ENCODE measurements at regions of chr11 and their contacts with region 1.

Region 1: GRCh38 chr11:73393479-73394380 is 17.5 kb downstream of the RELT start:
- DNase-seq: peak; percentile 82
- CTCF ChIP-seq: peak; percentile 76

Region 2: GRCh38 chr11:73307323-73308002 is 86.3 kb before region 1 on chr11:
- CTCF ChIA-PET with region 1: interaction called, 15 read pairs
- POLR2A ChIA-PET with region 1: no interaction called
- DNase-seq: peak; percentile 95
- CTCF ChIP-seq: peak; percentile 89

Region 3: DNA sequence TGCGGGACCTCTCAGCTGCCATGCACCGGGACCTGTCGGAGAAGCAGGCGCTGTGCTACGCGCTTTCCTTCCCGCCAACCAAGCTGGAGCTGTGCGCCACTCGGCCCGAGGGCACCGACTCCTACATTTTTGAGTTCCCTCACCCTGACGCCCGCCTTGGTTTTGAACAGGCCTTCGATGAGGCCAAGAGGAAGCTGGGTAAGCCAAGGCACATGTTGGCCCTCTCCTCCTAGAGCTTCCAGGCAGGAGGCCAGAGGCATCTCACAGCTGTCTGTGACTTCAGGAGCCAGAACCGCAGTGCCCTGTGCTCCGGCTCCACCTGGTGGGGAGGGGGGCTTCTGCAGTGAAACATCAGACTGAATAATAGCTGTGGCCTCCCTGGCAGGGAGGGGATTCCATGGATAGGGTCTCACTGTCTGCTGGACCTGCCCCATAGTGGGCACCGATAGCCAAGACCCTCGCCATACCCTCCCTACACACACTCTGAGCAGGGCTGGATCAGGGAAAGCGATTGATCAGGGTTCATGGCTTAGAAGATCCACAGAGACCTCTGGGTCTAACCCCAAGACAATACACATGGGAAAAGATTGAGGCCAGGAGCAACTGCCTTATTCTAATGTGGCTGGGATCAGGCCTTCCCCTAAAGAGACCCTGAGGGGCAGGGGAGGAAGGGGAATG is 33.3 kb before region 1 on chr11:
- CTCF ChIA-PET with region 1: interaction called, 24 read pairs
- POLR2A ChIA-PET with region 1: no interaction called
- DNase-seq: no peak
- CTCF ChIP-seq: peak; percentile 32

Region 4: GRCh38 chr11:73404048-73404447 is 10.3 kb after region 1 on chr11:
- CTCF ChIA-PET with region 1: interaction called, 12 read pairs
- POLR2A ChIA-PET with region 1: no interaction called
- DNase-seq: peak; percentile 18
- CTCF ChIP-seq: peak; percentile 21

Region 5: GRCh38 chr11:73507086-73507485 is 113.4 kb after region 1 on chr11:
- CTCF ChIA-PET with region 1: no interaction called
- POLR2A ChIA-PET with region 1: no interaction called
- DNase-seq: no peak
- CTCF ChIP-seq: no peak

Region 6: GRCh38 chr11:73680687-73681086 is 287.0 kb after region 1 on chr11:
- CTCF ChIA-PET with region 1: no interaction called
- POLR2A ChIA-PET with region 1: no interaction called
- DNase-seq: no peak
- CTCF ChIP-seq: no peak